ENCODE measurements at regions of chr1 and their contacts with region 1.

Region 1: DNA sequence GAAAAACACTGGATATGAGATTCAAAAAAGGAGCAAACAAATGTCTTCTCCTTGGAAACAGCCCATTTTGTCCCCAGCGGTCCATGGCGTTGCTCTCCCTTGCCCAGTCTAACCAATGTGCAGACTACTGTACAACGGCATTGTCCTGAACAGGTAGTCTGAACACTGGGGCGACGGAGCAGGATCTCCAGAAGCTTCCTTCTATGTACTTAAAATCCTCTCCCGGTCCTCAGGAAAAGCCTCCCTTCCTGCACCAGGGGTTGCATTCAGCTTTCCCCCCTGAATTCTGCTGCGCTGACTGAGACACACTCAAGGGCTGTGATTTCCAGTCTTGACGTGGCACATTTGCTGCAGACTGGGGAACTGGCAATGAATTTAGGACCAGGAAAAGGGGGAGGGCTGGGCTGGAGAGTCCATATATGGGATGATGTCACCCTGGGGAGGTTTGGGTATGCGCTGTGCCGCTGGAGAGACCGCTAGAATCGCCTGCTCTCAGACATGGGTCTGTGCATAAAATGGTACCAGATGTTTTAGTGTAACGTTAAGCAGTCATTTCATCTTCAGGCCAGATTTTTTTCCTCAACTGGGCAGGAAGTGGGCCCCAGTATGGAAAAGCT is 275.9 kb upstream of the C1orf105 start:
- DNase-seq: peak; percentile 98
- ATAC-seq: peak; percentile 90
- H3K4me3 ChIP-seq: peak overlapping the region; percentile 65
- H3K27ac ChIP-seq: peak overlapping the region; percentile 86
- H3K4me1 ChIP-seq: peaks cover 5% of the 10 kb centered on the region; the same call in 1 of the 2 replicates
- H3K27me3 ChIP-seq: no peaks in the 10 kb centered on the region
- CTCF ChIP-seq: no peak
- POLR2A ChIP-seq: peak; percentile 87
- RAD21 ChIP-seq: peak; percentile 18; the same call in 1 of the 2 replicates

Region 2: DNA sequence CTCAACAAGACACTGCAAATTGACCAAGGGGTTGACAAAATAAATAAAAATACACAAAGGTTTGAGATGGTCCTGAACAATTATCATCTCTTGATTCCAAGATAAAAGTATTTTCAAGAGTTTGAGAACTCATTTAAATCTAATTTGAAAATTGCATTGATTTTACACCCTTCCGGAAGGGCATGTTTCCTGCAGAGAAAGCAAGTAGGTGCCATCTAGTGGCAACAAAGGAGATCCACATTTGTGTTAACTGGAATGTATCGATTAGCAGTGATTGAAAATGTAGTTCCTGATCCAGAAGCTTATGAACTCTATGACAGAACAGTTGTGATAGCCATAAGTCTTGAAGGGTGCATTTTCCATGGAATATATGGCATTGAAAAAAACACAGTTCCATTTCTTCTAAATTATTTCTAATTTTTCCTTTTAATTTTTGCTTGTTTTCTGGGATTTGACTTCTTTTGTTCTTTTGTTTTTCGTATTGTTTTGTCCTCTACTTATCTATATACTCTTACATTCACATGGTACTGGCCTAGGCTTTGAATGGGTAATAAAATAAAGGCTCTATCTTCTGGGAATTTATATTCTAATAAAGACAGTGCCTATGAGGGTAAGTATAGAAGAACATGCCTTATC is 159.6 kb before region 1 on chr1:
- CTCF ChIA-PET with region 1: no interaction called
- POLR2A ChIA-PET with region 1: no interaction called
- dilution Hi-C with region 1: no loop called
- in situ Hi-C with region 1: no loop called
- intact Hi-C with region 1: no loop called
- DNase-seq: peak; percentile 49
- ATAC-seq: peak; percentile 71; the same call in 1 of the 2 replicates
- H3K4me3 ChIP-seq: no peak overlapping the region
- H3K27ac ChIP-seq: no peak overlapping the region
- H3K4me1 ChIP-seq: no peaks in the 10 kb centered on the region
- H3K27me3 ChIP-seq: no peaks in the 10 kb centered on the region
- CTCF ChIP-seq: peak; percentile 73
- POLR2A ChIP-seq: no peak
- RAD21 ChIP-seq: peak; percentile 75

Region 3: GRCh38 chr1:172054172-172054571 is 90.4 kb before region 1 on chr1:
- CTCF ChIA-PET with region 1: no interaction called
- POLR2A ChIA-PET with region 1: no interaction called
- dilution Hi-C with region 1: no loop called
- in situ Hi-C with region 1: no loop called
- intact Hi-C with region 1: no loop called
- DNase-seq: no peak
- ATAC-seq: no peak
- H3K4me3 ChIP-seq: no peak overlapping the region
- H3K27ac ChIP-seq: no peak overlapping the region
- H3K4me1 ChIP-seq: no peaks in the 10 kb centered on the region
- H3K27me3 ChIP-seq: no peaks in the 10 kb centered on the region
- CTCF ChIP-seq: no peak
- POLR2A ChIP-seq: no peak
- RAD21 ChIP-seq: no peak

Region 4: GRCh38 chr1:172180501-172181285 is 36.1 kb after region 1 on chr1:
- CTCF ChIA-PET with region 1: interaction called, 3 read pairs
- POLR2A ChIA-PET with region 1: interaction called, 5 read pairs
- dilution Hi-C with region 1: no loop called
- in situ Hi-C with region 1: no loop called
- intact Hi-C with region 1: loop called (anchors 1 kb)
- DNase-seq: peak; percentile 70
- ATAC-seq: peak; percentile 67
- H3K4me3 ChIP-seq: peak overlapping the region; percentile 52; the same call in 1 of the 2 replicates
- H3K27ac ChIP-seq: peak overlapping the region; percentile 99
- H3K4me1 ChIP-seq: peaks cover 12% of the 10 kb centered on the region
- H3K27me3 ChIP-seq: no peaks in the 10 kb centered on the region
- CTCF ChIP-seq: no peak
- POLR2A ChIP-seq: no peak
- RAD21 ChIP-seq: no peak

Region 5: DNA sequence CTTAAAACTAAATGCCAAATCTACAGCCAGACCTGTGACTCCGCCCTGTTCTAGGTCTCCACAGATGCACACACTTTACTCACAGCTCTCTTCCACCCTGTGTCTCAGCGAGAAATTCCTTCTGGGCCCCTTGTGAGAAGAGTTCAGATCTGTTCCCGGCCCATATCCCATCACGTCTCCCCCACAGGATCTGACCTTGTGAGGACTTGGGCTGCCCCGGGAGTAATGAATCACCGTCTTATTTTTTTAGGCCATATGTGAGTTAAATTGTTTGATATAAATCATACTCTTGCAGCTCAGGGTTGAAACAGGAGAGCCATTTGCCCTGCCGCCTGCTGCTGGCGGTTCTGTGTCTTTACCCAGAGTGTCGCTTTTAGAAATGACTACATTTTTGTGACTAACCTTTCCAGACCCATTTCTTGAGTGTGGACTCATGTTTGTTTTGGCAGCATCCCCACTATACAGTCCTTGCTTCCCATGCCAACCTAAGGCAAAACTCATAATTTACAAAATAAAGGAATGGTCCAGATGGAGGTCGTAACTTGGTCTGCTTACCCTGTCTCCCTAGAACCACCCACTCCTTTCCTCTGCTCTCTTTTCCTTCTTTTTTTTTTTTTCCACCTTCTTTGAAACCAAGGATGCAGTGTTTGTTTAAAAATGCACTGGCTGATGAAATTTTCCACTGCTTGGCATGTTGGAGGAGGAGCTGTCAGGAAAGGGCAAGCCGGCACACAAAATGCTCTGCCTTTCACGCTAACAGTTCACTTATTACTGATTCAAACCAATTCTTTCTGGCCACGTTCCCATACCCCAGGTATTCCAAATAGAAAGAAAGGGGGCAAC is 177.9 kb after region 1 on chr1:
- CTCF ChIA-PET with region 1: no interaction called
- POLR2A ChIA-PET with region 1: interaction called, 3 read pairs
- dilution Hi-C with region 1: no loop called
- in situ Hi-C with region 1: no loop called
- intact Hi-C with region 1: loop called (anchors 1 kb)
- DNase-seq: peak; percentile 88
- ATAC-seq: peak; percentile 79
- H3K4me3 ChIP-seq: no peak overlapping the region
- H3K27ac ChIP-seq: peak overlapping the region; percentile 75
- H3K4me1 ChIP-seq: peaks cover 21% of the 10 kb centered on the region
- H3K27me3 ChIP-seq: no peaks in the 10 kb centered on the region
- CTCF ChIP-seq: no peak
- POLR2A ChIP-seq: no peak
- RAD21 ChIP-seq: no peak; the same call in 1 of the 2 replicates

Region 6: GRCh38 chr1:172357753-172358385 is 213.3 kb after region 1 on chr1:
- CTCF ChIA-PET with region 1: interaction called, 3 read pairs
- POLR2A ChIA-PET with region 1: no interaction called
- dilution Hi-C with region 1: no loop called
- in situ Hi-C with region 1: no loop called
- intact Hi-C with region 1: loop called (anchors 2 kb)
- DNase-seq: no peak
- ATAC-seq: no peak
- H3K4me3 ChIP-seq: no peak overlapping the region
- H3K27ac ChIP-seq: peak overlapping the region; percentile 57
- H3K4me1 ChIP-seq: peaks cover 10% of the 10 kb centered on the region
- H3K27me3 ChIP-seq: no peaks in the 10 kb centered on the region
- CTCF ChIP-seq: no peak
- POLR2A ChIP-seq: no peak
- RAD21 ChIP-seq: no peak

Region 7: DNA sequence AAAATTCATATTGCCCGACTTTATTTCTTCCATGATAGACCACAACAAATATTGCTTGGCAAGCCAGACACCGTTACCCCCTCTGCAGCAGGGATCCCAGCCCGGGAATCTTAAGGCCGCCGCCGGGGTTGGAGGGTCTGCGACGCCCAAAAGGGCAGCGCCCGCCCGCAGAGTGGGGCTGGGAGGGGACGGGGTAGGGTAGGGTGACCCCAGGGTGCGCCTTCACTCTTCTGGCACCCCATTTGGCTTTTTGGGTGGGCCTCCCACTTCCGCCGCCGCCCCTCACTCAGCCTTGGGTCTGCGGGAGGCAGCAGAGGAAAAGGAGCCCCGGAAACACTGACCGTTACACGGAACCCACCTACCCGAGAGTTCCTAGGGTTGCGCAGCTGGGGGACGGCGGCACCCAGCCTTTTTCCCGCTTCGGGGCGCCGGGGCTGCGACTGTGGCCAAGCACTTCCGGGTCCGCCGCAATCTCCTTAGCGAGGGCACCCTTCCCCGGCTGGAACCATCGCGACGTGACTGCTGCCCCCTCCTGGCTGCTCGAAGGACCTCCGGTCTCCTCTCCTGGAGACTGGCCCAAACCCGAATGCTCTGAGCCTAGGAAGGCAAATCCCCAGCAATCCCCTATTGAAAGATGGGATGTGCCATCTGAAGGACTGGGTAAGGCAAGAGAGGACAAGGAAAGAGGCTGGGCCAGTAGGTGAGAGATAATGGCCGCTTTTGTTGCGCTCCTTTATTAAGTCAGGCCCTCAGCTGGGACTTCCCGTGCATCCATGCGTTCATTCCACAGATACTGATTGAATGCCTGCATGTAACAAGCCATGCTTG is 299.3 kb after region 1 on chr1 and contains the start of gene PIGC:
- CTCF ChIA-PET with region 1: no interaction called
- POLR2A ChIA-PET with region 1: no interaction called
- dilution Hi-C with region 1: no loop called
- in situ Hi-C with region 1: no loop called
- intact Hi-C with region 1: loop called (anchors 5 kb)
- DNase-seq: peak; percentile 79
- ATAC-seq: peak; percentile 99
- H3K4me3 ChIP-seq: peak within 1 kb of the TSS; percentile 90
- H3K27ac ChIP-seq: peak within 1 kb of the TSS; percentile 84
- H3K4me1 ChIP-seq: peaks cover 4% of the 10 kb centered on the region
- H3K27me3 ChIP-seq: no peaks in the 10 kb centered on the region
- CTCF ChIP-seq: peak; percentile 87
- POLR2A ChIP-seq: no peak
- RAD21 ChIP-seq: peak; percentile 75
- total RNA-seq, gene PIGC: 14.9 and 19.4 TPM in 2 replicates

Region 8: DNA sequence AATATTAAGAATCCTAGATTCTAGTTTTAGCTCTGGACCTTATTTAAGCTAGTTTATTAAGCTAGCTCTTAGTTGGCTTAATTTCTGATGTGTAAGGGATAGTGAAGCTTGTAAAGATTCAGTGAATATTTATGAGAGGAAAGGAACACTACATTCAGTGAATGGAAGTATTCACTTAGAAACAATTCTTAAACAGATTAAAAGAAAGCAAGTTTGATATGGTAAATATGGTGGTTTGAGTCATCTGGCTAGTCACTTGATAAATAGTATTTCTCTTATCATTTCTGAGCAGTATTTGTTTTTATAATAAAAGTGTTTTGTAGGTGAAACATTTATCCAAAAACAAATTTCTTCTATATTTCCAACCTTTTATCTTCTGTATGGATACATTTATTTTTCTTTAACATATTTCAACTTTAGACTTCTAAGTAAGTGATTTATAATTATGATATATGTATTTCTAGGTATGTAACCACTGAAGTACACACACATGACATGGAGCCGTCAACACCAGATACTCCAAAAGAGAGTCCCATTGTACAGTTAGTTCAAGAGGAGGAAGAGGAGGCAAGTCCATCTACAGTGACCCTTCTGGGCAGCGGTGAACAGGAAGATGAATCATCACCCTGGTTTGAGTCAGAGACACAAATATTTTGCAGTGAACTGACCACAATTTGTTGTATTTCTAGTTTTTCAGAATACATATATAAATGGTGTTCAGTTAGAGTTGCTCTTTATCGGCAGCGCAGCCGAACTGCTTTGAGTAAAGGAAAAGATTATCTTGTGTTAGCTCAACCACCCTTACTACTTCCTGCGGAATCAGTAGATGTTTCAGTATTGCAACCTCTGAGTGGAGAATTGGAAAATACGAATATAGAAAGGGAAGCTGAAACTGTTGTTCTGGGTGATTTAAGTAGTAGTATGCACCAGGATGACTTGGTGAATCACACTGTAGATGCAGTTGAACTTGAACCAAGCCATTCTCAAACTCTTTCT is 444.0 kb after region 1 on chr1:
- CTCF ChIA-PET with region 1: no interaction called
- POLR2A ChIA-PET with region 1: no interaction called
- dilution Hi-C with region 1: no loop called
- in situ Hi-C with region 1: no loop called
- intact Hi-C with region 1: loop called (anchors 10 kb)
- DNase-seq: peak; percentile 94
- ATAC-seq: peak; percentile 96
- H3K4me3 ChIP-seq: peak overlapping the region; percentile 33; the same call in 1 of the 2 replicates
- H3K27ac ChIP-seq: peak overlapping the region; percentile 81
- H3K4me1 ChIP-seq: peaks cover 4% of the 10 kb centered on the region; the same call in 1 of the 2 replicates
- H3K27me3 ChIP-seq: no peaks in the 10 kb centered on the region
- CTCF ChIP-seq: no peak
- POLR2A ChIP-seq: no peak
- RAD21 ChIP-seq: no peak

Region 9: GRCh38 chr1:173798078-173798477 is 1653.5 kb after region 1 on chr1:
- CTCF ChIA-PET with region 1: no interaction called
- POLR2A ChIA-PET with region 1: interaction called, 20 read pairs
- dilution Hi-C with region 1: no loop called
- in situ Hi-C with region 1: no loop called
- intact Hi-C with region 1: no loop called
- DNase-seq: no peak
- ATAC-seq: no peak
- H3K4me3 ChIP-seq: no peak overlapping the region
- H3K27ac ChIP-seq: no peak overlapping the region
- H3K4me1 ChIP-seq: no peaks in the 10 kb centered on the region
- H3K27me3 ChIP-seq: no peaks in the 10 kb centered on the region
- CTCF ChIP-seq: no peak
- POLR2A ChIP-seq: no peak
- RAD21 ChIP-seq: no peak